ENCODE measurements at regions of chr2 and their contacts with region 1.

Region 1: DNA sequence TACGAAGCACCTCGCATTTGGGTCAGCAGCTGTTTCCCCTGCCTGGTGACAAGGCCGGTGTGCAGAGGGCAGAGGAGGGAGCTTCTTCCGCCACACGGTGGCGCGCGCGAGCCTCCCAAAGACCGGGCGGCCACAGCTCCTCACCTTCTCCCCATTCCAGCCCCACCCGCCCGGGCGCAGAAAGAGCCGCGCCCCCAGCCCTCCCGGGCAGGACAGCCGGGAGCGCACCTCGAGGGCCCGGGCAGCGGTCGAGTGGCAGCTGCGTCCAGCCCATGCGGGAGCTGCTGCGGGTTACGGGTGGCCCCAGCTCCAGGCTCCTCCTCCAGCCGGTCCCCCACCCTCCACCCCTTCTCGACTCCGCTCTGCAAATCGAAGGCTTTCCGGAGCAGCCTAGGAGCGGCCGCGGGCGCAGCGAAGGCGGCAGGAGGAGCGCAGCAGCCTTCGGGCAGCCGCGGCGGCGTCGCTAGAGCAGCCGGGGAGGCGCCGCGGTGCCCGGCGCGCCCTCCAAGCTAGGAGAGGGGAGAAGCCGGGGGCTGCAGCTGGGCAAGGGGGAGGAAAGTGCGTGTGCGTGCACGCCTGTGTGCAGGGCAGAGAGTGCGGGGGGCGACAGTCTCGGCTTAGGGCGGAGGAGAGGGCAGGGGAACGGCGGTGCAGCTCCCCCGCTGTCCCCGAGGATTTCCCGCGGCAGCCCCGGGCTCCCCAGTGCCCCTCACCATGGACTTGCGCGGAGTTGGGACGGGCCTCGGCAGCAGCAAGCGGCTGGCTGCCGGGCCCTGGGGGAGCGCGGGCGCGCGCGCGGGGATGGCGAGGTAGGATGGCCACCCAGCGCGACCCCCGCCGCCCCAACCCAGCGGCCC is at the start of gene CCDC85A:
- DNase-seq: peak; percentile 89
- total RNA-seq, gene CCDC85A: 2.7 TPM

Region 2: GRCh38 chr2:56314796-56315195 is 130.9 kb after region 1 on chr2:
- intact Hi-C with region 1: loop called (anchors 2 kb)
- DNase-seq: no peak

Region 3: DNA sequence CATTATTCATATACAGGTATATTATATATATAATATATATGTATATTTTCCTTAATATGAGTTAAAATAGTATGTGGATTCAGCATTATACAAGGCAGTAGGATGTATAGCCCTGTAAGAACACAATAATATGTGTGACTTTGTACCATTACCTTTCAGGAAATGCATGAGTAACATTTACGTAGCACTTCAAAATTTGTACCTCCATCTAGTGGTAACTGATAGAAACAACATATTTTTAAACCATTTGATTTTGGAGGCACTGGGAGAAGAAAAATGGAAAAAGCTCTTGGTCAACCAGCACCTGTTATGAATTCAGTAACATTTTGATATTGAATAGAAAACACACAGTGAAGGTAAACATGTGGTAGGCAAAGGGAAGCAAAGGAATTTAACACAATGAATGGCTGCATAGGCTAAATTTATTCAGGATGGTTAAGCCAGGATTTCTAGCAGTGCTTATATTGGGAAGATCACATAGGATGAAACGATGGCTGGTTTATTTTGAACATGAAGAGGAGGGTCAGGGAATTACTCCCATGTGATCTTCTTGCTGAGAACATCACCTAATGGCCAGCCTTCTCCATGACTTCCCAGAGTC is 565.4 kb after region 1 on chr2:
- intact Hi-C with region 1: loop called (anchors 2 kb)
- DNase-seq: no peak

Region 4: DNA sequence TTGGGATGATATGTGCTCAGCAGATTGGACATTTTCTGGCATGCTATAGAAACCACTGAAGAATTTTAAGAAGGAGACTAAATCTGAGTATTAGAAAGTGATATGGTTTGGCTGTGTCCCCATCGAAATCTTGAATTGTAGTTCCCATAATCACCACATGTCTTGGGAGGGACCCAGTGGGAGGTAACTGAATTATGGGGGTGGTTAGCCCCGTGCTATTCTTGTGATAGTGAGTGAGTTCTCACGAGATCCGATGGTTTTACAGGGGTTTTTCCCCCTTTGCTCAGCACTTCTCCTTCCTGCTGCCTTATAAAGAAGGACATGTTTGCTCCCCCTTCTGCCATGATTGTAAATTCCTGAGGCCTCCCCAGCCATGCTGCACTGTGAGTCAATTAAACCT is 1326.8 kb after region 1 on chr2:
- intact Hi-C with region 1: loop called (anchors 5 kb)
- DNase-seq: no peak